Activated T-helper 2 cell treated with anti-CD3 and anti-CD28 coated beads, Interferon-gamma antibody, Interleukin-2, Interleukin-4, amounts not matched to agents 10 μg/mL and 5 μg/mL and 100 μg/mL, durations not matched to agents 14 hours and 24 hours and 36 hours (primary cell): ENCODE measurements at regions of chr16 and their contacts with region 1.

Region 1: GRCh38 chr16:80580109-80580832 is 39.5 kb downstream of the DYNLRB2 start:
- DNase-seq: peak; percentile 76
- H3K4me3 Mint-ChIP-seq: peak overlapping the region; percentile 82
- H3K27ac Mint-ChIP-seq: peak overlapping the region; percentile 99
- H3K4me1 Mint-ChIP-seq: peaks cover 51% of the 10 kb centered on the region
- H3K27me3 Mint-ChIP-seq: no peaks in the 10 kb centered on the region

Region 2: GRCh38 chr16:79316004-79316458 is 1264.2 kb before region 1 on chr16:
- intact Hi-C with region 1: loop called (anchors 5 kb)
- DNase-seq: peak; percentile 56
- H3K4me3 Mint-ChIP-seq: peak overlapping the region; percentile 42
- H3K27ac Mint-ChIP-seq: peak overlapping the region; percentile 89
- H3K4me1 Mint-ChIP-seq: peaks cover 44% of the 10 kb centered on the region
- H3K27me3 Mint-ChIP-seq: no peaks in the 10 kb centered on the region

Region 3: DNA sequence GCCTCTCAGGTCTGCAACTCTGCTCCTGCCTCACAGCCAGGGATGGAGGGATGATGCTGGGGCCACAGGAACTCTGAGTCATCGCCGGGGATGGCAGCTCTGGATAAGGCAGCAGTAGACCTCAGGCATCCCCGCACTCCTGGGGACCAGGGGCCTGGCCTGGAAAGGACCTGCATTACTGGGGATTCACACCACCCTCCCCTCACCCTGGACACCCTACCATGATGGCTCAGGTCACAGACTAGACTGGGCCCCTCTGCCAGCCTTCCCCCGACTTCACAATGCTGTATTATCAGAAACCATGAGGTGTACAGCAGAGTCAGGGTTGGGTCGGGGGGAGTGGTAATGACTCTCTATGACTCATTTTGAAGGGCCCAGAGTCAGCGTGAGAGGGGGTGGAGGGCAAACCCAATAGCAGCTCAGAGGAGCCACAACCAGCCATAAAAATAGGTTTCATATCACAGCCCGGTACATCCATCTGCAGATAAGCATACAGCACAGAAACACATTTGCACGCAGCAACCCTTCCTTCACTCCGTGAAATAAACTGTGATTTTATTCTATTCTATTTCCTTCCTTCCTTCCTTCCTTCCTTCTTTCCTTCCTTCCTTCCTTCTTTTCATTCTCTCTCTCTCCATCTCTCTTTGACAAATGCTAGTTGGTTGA is 10.7 kb before region 1 on chr16:
- intact Hi-C with region 1: loop called (anchors 1 kb)
- DNase-seq: peak; percentile 76
- H3K4me3 Mint-ChIP-seq: peak overlapping the region; percentile 34
- H3K27ac Mint-ChIP-seq: peak overlapping the region; percentile 83
- H3K4me1 Mint-ChIP-seq: peaks cover 42% of the 10 kb centered on the region
- H3K27me3 Mint-ChIP-seq: peaks cover 2% of the 10 kb centered on the region

Region 4: GRCh38 chr16:80691111-80691741 is 111.0 kb after region 1 on chr16:
- intact Hi-C with region 1: loop called (anchors 5 kb)
- DNase-seq: no peak
- H3K4me3 Mint-ChIP-seq: no peak overlapping the region
- H3K27ac Mint-ChIP-seq: no peak overlapping the region
- H3K4me1 Mint-ChIP-seq: peaks cover 42% of the 10 kb centered on the region
- H3K27me3 Mint-ChIP-seq: no peaks in the 10 kb centered on the region

Region 5: DNA sequence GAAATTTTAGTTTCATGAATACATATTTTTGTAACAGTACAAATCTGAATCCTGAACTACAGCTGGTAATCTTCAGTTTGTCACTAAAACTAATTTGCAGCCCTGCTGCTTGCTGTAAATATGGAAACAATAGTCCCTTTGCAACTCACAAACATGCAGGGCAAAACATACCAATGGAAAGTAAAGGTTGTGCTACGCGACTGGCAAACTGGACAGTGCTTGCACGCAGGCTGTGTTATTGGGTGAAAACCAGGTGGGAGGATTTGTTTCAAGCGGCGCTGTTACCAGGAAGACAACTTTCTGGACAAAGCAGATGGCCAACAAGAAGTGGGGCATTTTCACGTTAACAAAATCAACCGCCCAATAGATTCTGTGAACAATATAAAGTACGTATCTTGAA is 130.6 kb after region 1 on chr16:
- intact Hi-C with region 1: no loop called
- DNase-seq: no peak
- H3K4me3 Mint-ChIP-seq: no peak overlapping the region
- H3K27ac Mint-ChIP-seq: no peak overlapping the region
- H3K4me1 Mint-ChIP-seq: no peaks in the 10 kb centered on the region
- H3K27me3 Mint-ChIP-seq: no peaks in the 10 kb centered on the region

Region 6: DNA sequence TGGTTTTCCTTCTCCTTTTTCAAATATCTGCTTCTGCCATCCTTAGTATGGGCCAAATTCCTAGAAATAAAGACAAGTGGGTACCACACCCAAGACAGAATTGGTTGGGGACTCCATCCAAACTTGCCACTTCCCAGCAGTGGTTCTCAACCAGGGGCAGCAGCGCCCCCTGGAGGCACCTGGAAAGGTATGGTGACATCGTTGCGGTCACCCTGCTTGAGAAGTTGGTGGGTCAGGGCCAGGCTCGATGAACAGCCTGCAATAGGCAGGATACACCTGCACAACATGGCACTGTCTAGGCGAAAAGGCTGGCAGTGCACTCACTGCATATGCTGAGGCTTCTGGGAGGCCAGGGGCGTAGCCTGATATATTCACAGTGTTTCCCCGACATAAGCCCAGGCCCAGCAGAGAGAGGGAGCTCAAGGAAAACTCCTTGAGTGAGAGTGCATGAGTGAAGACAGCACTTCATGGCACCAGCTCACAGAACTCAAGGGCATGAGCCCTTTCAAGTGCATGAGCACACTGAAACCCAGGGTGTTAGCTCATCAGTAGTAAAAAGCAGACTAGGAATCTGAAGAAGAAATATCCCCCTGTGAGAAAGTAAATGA is 368.7 kb after region 1 on chr16:
- intact Hi-C with region 1: loop called (anchors 5 kb)
- DNase-seq: no peak
- H3K4me3 Mint-ChIP-seq: no peak overlapping the region
- H3K27ac Mint-ChIP-seq: no peak overlapping the region
- H3K4me1 Mint-ChIP-seq: peaks cover 22% of the 10 kb centered on the region
- H3K27me3 Mint-ChIP-seq: peaks cover 4% of the 10 kb centered on the region